Activated T-helper 1 cell treated with anti-CD3 and anti-CD28 coated beads, Interleukin-12 subunit alpha, Interleukin-12 subunit beta, Interleukin-2, Interleukin-4 antibody, amounts not matched to agents 30 ng/mL and 10 ng/mL and 1 ng/mL, durations not matched to agents 14 hours and 24 hours and 36 hours (primary cell): ENCODE measurements at regions of chr11 and their contacts with region 1.

Region 1: GRCh38 chr11:85810871-85811611 is at the start of gene SYTL2:
- DNase-seq: peak; percentile 83
- H3K4me3 Mint-ChIP-seq: peak within 1 kb of the TSS; percentile 94
- H3K27ac Mint-ChIP-seq: peak within 1 kb of the TSS; percentile 85
- H3K4me1 Mint-ChIP-seq: peaks cover 52% of the 10 kb centered on the region
- H3K27me3 Mint-ChIP-seq: no peaks in the 10 kb centered on the region
- total RNA-seq, gene SYTL2: 37.1 and 38.7 TPM in 2 replicates

Region 2: GRCh38 chr11:85627998-85628770 is 182.9 kb before region 1 on chr11 and contains the start of gene TMEM126B:
- intact Hi-C with region 1: loop called (anchors 1 kb)
- DNase-seq: peak; percentile 96
- H3K4me3 Mint-ChIP-seq: peak within 1 kb of the TSS; percentile 97
- H3K27ac Mint-ChIP-seq: peak within 1 kb of the TSS; percentile 94
- H3K4me1 Mint-ChIP-seq: peaks cover 52% of the 10 kb centered on the region
- H3K27me3 Mint-ChIP-seq: peaks cover 6% of the 10 kb centered on the region
- total RNA-seq, gene TMEM126B: 52.5 and 57.2 TPM in 2 replicates

Region 3: DNA sequence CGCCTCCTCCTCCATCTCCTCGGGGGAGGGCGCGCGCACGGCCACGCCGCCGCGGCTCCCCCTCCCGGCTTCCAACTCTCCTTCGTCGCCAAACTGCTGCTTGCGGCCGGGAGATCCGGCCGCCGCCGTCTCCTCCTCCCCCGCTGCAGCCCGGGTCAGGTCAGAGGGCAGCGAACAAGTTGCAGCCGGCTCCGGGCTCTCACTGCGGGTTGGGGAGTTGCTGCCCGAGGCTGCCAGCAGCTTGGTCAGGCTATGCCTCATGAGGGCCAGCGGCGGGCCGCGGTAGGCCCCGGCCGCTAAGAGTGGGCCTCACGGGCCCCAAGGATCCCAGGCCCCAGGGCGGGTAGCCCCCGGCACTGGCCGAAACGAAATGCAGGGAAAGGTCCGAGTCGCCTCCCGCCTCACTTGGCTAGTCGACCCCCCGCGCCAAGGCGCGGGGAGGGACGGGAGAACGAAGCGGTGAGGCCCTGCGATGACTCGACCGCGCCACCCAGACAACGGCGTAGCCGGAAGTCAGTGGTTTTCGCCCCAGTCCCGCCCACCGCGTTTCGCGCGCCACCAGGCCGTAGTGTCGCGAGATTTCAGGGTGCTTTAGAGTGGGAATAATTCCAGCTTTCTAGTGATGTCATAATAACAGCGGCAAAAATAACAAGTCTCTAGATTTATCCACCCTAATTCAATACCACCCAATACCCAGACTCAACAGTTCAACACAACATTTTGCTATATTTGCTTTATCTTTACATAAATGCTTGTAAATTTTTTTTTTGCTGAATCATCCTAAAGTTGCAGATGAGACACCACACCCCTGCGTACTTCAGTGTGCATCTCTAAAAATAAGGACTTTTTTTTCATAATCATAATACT is 146.2 kb before region 1 on chr11 and contains the start of gene CREBZF:
- intact Hi-C with region 1: loop called (anchors 1 kb)
- DNase-seq: peak; percentile 94
- H3K4me3 Mint-ChIP-seq: peak within 1 kb of the TSS; percentile 99
- H3K27ac Mint-ChIP-seq: peak within 1 kb of the TSS; percentile 97
- H3K4me1 Mint-ChIP-seq: peaks cover 51% of the 10 kb centered on the region
- H3K27me3 Mint-ChIP-seq: no peaks in the 10 kb centered on the region
- total RNA-seq, gene CREBZF: 52.0 and 55.9 TPM in 2 replicates

Region 4: GRCh38 chr11:85766721-85767161 is 44.3 kb before region 1 on chr11:
- intact Hi-C with region 1: loop called (anchors 1 kb)
- DNase-seq: no peak
- H3K4me3 Mint-ChIP-seq: no peak overlapping the region
- H3K27ac Mint-ChIP-seq: no peak overlapping the region
- H3K4me1 Mint-ChIP-seq: peaks cover 84% of the 10 kb centered on the region
- H3K27me3 Mint-ChIP-seq: no peaks in the 10 kb centered on the region

Region 5: GRCh38 chr11:85779956-85780640 is 30.9 kb before region 1 on chr11:
- intact Hi-C with region 1: loop called (anchors 2 kb)
- DNase-seq: no peak
- H3K4me3 Mint-ChIP-seq: no peak overlapping the region
- H3K27ac Mint-ChIP-seq: no peak overlapping the region
- H3K4me1 Mint-ChIP-seq: peaks cover 61% of the 10 kb centered on the region
- H3K27me3 Mint-ChIP-seq: no peaks in the 10 kb centered on the region